Psoas muscle (tissue), 8 donors: ENCODE measurements at regions of chr11 and their contacts with region 1.

Region 1: DNA sequence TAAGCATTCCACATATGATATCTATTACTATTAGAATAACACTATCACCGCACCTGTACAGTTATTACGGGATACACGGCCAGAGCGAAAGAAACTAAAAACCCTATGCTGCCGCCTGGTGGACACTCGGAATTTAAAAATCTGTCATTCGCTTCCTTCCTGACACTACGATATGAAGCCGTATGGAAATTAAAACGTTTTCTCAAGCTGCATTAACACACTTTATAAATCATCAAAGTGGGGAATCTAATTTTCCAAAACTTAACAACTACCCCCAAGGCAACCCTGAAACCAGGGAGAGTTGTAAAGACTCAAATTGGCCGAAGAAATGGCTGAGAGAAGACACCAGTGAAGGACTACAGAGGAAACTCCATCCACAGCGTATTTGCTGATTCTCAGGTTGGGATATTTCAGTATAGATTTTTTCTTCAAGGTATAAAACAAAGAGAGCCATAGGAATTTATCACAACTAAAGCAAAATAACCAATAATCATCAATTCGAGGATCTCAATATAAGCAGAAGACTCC is 1.4 kb downstream of the CCDC73 start:
- DNase-seq: peak in 1 of 2 donors; percentile 35
- ATAC-seq: peak in 2 of 4 donors; percentile 64 to 75
- H3K4me3 ChIP-seq: peak overlapping the region; percentile 47
- H3K27ac ChIP-seq: no peak overlapping the region
- H3K4me1 ChIP-seq: no peaks in the 10 kb centered on the region
- H3K27me3 ChIP-seq: peaks cover 0 to 8% (median 0%) of the 10 kb centered on the region in 3 donors
- CTCF ChIP-seq: peak; percentile 64

Region 2: DNA sequence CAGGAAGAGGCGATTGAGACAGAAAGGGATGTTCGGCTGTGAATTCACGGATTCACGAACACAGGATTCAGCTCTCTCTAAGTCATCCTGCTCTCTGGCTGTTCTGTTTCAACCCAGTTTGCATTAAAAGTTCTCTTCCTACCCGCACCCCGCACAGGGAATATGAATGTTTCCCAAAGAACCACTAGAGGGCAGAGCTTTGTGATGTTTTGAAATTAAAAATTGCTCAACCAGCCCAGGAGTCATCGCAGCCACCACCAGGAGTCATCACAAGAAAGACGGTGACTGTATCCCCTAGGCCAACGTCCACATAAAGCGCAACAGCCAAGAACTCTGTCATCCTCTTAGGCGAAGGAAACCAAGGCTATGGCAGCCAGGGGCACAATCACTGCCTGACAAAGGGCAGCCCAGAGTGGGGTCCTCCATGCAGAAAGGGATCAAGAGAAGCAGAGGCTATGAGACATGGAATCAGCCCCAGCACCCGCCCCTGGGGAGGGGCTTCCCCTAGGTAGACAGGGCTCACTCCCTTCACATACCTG is 480.1 kb before region 1 on chr11:
- intact Hi-C with region 1: loop called in 1 of 2 experiments (anchors 10 kb)
- DNase-seq: no peak
- ATAC-seq: peak in 3 of 4 donors; percentile 40 to 53 (median 49)
- H3K4me3 ChIP-seq: no peak overlapping the region
- H3K27ac ChIP-seq: no peak overlapping the region
- H3K4me1 ChIP-seq: no peaks in the 10 kb centered on the region
- H3K27me3 ChIP-seq: peaks cover 0 to 4% (median 0%) of the 10 kb centered on the region in 3 donors
- CTCF ChIP-seq: peak; percentile 17

Region 3: DNA sequence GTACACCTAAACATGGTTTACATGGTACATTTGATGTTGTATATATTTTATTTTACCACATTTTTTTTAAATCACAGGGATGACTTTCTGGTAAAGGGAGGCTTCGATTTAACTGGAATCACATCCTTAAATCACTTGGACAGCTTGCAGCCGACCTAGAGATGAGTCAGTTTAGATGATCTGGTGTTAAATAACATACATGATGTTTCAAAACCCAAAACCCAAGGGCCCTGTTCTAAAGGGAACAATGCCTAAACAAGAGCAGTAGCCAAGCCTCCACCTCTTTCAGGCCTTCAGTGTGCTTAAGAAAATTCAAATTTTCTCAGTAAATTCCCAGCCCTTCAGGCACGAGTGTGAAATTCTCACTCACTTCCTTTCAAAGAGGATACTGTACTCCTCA is 466.5 kb before region 1 on chr11:
- intact Hi-C with region 1: loop called in 1 of 2 experiments (anchors 10 kb)
- DNase-seq: no peak
- ATAC-seq: no peak
- H3K4me3 ChIP-seq: no peak overlapping the region
- H3K27ac ChIP-seq: no peak overlapping the region
- H3K4me1 ChIP-seq: no peaks in the 10 kb centered on the region
- H3K27me3 ChIP-seq: no peaks in the 10 kb centered on the region
- CTCF ChIP-seq: no peak

Region 4: DNA sequence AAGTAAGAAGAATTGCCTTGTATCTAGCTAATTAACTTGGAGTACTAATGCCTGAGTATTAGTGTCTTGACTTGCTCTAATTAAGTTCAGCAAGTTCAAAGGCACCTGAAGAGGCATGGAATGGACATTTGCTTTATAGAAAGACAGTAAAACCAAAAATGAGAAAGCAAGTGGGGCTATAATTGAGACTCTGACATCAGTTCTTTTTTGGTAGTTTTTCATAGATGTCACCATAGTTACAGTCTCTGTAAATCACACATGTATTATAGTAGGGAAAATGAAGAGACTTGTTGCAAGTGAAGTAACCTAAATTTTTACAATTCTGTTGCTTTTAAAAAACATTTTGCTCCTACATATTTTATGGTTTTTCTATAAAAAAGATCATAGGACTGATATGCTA is 642.2 kb after region 1 on chr11:
- intact Hi-C with region 1: no loop called
- DNase-seq: no peak
- ATAC-seq: no peak
- H3K4me3 ChIP-seq: no peak overlapping the region
- H3K27ac ChIP-seq: no peak overlapping the region
- H3K4me1 ChIP-seq: no peaks in the 10 kb centered on the region
- H3K27me3 ChIP-seq: peaks cover 0 to 4% (median 3%) of the 10 kb centered on the region in 3 donors
- CTCF ChIP-seq: no peak